ENCODE measurements at regions of chr2 and their contacts with region 1.

Region 1: GRCh38 chr2:226478109-226478809 is 321.4 kb downstream of the IRS1 start:
- DNase-seq: peak; percentile 76
- H3K4me3 Mint-ChIP-seq: no peak overlapping the region
- H3K27ac Mint-ChIP-seq: peak overlapping the region; percentile 85
- H3K4me1 Mint-ChIP-seq: peaks cover 62% of the 10 kb centered on the region
- H3K27me3 Mint-ChIP-seq: no peaks in the 10 kb centered on the region
- CTCF ChIP-seq: no peak

Region 2: GRCh38 chr2:226040344-226040900 is 437.8 kb before region 1 on chr2:
- CTCF ChIA-PET with region 1: no interaction called
- intact Hi-C with region 1: loop called (anchors 5 kb)
- DNase-seq: no peak
- H3K4me3 Mint-ChIP-seq: no peak overlapping the region
- H3K27ac Mint-ChIP-seq: no peak overlapping the region
- H3K4me1 Mint-ChIP-seq: peaks cover 9% of the 10 kb centered on the region
- H3K27me3 Mint-ChIP-seq: no peaks in the 10 kb centered on the region
- CTCF ChIP-seq: no peak

Region 3: GRCh38 chr2:226137201-226137811 is 341.0 kb before region 1 on chr2:
- CTCF ChIA-PET with region 1: no interaction called
- intact Hi-C with region 1: loop called (anchors 5 kb)
- DNase-seq: peak; percentile 30
- H3K4me3 Mint-ChIP-seq: peak overlapping the region; percentile 45
- H3K27ac Mint-ChIP-seq: peak overlapping the region; percentile 17
- H3K4me1 Mint-ChIP-seq: peaks cover 32% of the 10 kb centered on the region
- H3K27me3 Mint-ChIP-seq: no peaks in the 10 kb centered on the region
- CTCF ChIP-seq: no peak

Region 4: GRCh38 chr2:226450141-226450540 is 28.1 kb before region 1 on chr2:
- CTCF ChIA-PET with region 1: no interaction called
- intact Hi-C with region 1: loop called (anchors 2 kb)
- DNase-seq: no peak
- H3K4me3 Mint-ChIP-seq: no peak overlapping the region
- H3K27ac Mint-ChIP-seq: no peak overlapping the region
- H3K4me1 Mint-ChIP-seq: peaks cover 10% of the 10 kb centered on the region
- H3K27me3 Mint-ChIP-seq: no peaks in the 10 kb centered on the region
- CTCF ChIP-seq: no peak

Region 5: DNA sequence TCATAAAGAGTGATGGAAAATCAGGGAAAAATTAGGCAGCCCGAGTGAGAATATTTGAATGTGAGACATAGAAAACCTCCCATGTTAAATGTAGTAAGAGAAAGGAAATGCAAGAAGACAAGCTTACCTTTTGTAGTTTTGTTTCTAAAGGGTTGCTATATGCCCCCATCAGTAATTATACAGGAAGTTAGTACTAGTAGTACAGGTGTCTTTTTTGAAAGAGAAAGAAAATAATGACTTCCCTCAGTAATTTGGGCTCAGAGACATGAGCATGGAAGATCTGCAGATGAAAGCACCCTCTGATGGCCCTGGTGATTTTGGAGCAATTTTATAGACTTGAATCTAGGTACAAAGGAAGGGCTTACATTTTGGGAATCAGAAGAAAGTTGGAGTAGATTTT is 438.4 kb after region 1 on chr2:
- CTCF ChIA-PET with region 1: no interaction called
- intact Hi-C with region 1: no loop called
- DNase-seq: no peak
- H3K4me3 Mint-ChIP-seq: no peak overlapping the region
- H3K27ac Mint-ChIP-seq: no peak overlapping the region
- H3K4me1 Mint-ChIP-seq: no peaks in the 10 kb centered on the region
- H3K27me3 Mint-ChIP-seq: no peaks in the 10 kb centered on the region
- CTCF ChIP-seq: no peak